ENCODE measurements at regions of chr6 and their contacts with region 1.

Region 1: GRCh38 chr6:7968879-7969278 is 58.3 kb upstream of the TXNDC5 start:
- DNase-seq: no peak
- ATAC-seq: no peak
- H3K4me3 ChIP-seq: no peak overlapping the region
- H3K4me3 Mint-ChIP-seq: no peak overlapping the region
- H3K27ac ChIP-seq: no peak overlapping the region
- H3K27ac Mint-ChIP-seq: no peak overlapping the region
- H3K4me1 ChIP-seq: no peaks in the 10 kb centered on the region
- H3K4me1 Mint-ChIP-seq: no peaks in the 10 kb centered on the region
- H3K27me3 ChIP-seq: no peaks in the 10 kb centered on the region
- H3K27me3 Mint-ChIP-seq: peaks cover 3 to 7% of the 10 kb centered on the region in 2 donors

Region 2: DNA sequence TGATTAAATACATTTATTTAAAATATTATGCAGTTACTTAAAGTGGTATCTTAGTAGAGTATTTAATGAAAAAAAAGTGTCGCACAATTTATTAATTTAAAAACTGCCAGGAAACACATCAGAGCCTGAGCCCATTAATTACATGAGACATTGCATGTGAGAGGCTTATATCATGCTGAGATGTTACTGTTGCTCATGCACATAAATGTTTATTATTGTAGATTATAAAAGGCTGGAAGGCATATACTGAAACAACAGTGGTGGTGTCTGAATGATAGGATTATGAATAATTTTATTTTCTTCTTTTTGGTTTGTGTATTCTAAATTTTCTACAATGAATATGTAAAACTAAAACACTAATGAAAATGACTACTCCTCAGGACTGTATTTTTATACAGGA is 12.6 kb before region 1 on chr6:
- CTCF ChIA-PET with region 1: no interaction called
- POLR2A ChIA-PET with region 1: interaction called in 1 of 2 experiments, 11 read pairs
- DNase-seq: no peak
- ATAC-seq: no peak
- H3K4me3 ChIP-seq: no peak overlapping the region
- H3K4me3 Mint-ChIP-seq: no peak overlapping the region
- H3K27ac ChIP-seq: no peak overlapping the region
- H3K27ac Mint-ChIP-seq: no peak overlapping the region
- H3K4me1 ChIP-seq: no peaks in the 10 kb centered on the region
- H3K4me1 Mint-ChIP-seq: no peaks in the 10 kb centered on the region
- H3K27me3 ChIP-seq: peaks cover 0 to 3% of the 10 kb centered on the region in 2 experiments
- H3K27me3 Mint-ChIP-seq: peaks cover 6 to 8% of the 10 kb centered on the region in 2 donors

Region 3: DNA sequence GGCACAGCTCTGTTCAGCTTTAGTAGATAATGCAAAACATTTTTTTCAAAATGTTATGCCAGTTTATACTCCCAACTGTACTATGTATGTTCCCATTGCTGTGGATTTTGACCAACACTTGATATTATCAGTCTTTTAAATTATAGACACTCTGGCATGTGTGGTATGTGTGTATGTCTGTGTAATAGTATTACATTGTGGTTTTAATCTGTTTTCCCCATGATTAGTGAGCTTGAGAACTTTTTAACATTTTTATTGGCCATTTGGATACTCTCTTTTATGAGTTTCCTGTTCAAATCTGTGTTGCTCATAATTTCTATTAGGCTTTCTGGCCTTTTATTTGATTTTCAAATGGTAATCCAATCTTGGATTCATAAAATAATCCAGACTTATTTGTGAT is 11.0 kb after region 1 on chr6:
- CTCF ChIA-PET with region 1: no interaction called
- POLR2A ChIA-PET with region 1: no interaction called
- DNase-seq: no peak
- ATAC-seq: no peak
- H3K4me3 ChIP-seq: no peak overlapping the region
- H3K4me3 Mint-ChIP-seq: no peak overlapping the region
- H3K27ac ChIP-seq: no peak overlapping the region
- H3K27ac Mint-ChIP-seq: no peak overlapping the region
- H3K4me1 ChIP-seq: no peaks in the 10 kb centered on the region
- H3K4me1 Mint-ChIP-seq: peaks cover 0 to 6% (median 5%) of the 10 kb centered on the region in 3 donors
- H3K27me3 ChIP-seq: peaks cover 0 to 11% of the 10 kb centered on the region in 2 experiments
- H3K27me3 Mint-ChIP-seq: peaks cover 11 to 19% of the 10 kb centered on the region in 2 donors

Region 4: DNA sequence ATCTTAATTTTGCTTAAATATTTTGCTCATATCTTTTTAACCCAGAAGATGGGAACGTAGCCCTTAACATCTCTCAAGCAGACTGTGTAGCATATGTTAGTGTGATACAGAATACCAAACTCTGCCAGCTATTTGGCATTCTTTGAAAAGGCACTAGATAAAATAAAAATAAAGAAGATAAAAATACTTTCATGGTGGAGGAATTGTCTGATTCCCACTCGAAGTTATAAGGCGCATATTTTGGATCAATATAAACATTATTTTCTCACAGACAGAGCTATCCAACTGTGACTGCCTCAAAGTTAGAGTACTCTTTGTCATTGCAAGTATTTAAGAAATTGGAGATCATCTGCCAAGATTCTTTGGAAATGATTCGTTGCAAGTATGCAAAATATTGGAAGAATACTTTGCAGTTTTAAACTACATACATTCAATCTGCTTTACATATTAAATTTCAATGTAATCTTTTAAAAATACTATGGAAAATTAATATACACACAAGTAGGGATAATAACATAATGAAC is 144.3 kb after region 1 on chr6:
- CTCF ChIA-PET with region 1: no interaction called
- POLR2A ChIA-PET with region 1: no interaction called
- DNase-seq: no peak
- ATAC-seq: no peak
- H3K4me3 ChIP-seq: no peak overlapping the region
- H3K4me3 Mint-ChIP-seq: no peak overlapping the region
- H3K27ac ChIP-seq: no peak overlapping the region
- H3K27ac Mint-ChIP-seq: no peak overlapping the region
- H3K4me1 ChIP-seq: no peaks in the 10 kb centered on the region
- H3K4me1 Mint-ChIP-seq: no peaks in the 10 kb centered on the region
- H3K27me3 ChIP-seq: peaks cover 2 to 11% of the 10 kb centered on the region in 2 experiments
- H3K27me3 Mint-ChIP-seq: peaks cover 33 to 42% of the 10 kb centered on the region in 2 donors

Region 5: GRCh38 chr6:8137529-8137939 is 168.7 kb after region 1 on chr6:
- CTCF ChIA-PET with region 1: no interaction called
- POLR2A ChIA-PET with region 1: no interaction called
- DNase-seq: no peak
- ATAC-seq: no peak
- H3K4me3 ChIP-seq: no peak overlapping the region
- H3K4me3 Mint-ChIP-seq: no peak overlapping the region
- H3K27ac ChIP-seq: no peak overlapping the region
- H3K27ac Mint-ChIP-seq: no peak overlapping the region
- H3K4me1 ChIP-seq: no peaks in the 10 kb centered on the region
- H3K4me1 Mint-ChIP-seq: no peaks in the 10 kb centered on the region
- H3K27me3 ChIP-seq: peaks cover 0 to 8% of the 10 kb centered on the region in 2 experiments
- H3K27me3 Mint-ChIP-seq: peaks cover 29 to 33% of the 10 kb centered on the region in 2 donors

Region 6: GRCh38 chr6:8229915-8230756 is 261.3 kb after region 1 on chr6:
- CTCF ChIA-PET with region 1: no interaction called
- POLR2A ChIA-PET with region 1: no interaction called
- DNase-seq: no peak
- ATAC-seq: no peak
- H3K4me3 ChIP-seq: no peak overlapping the region
- H3K4me3 Mint-ChIP-seq: no peak overlapping the region
- H3K27ac ChIP-seq: no peak overlapping the region
- H3K27ac Mint-ChIP-seq: no peak overlapping the region
- H3K4me1 ChIP-seq: no peaks in the 10 kb centered on the region
- H3K4me1 Mint-ChIP-seq: no peaks in the 10 kb centered on the region
- H3K27me3 ChIP-seq: peaks cover 0 to 9% of the 10 kb centered on the region in 2 experiments
- H3K27me3 Mint-ChIP-seq: peaks cover 5 to 15% of the 10 kb centered on the region in 2 donors

Measured in T-cell (primary cell).